Left ventricle myocardium superior (tissue), 1 donor: ENCODE measurements at regions of chr3 and their contacts with region 1.

Region 1: GRCh38 chr3:72999951-73000350 is 3.3 kb downstream of the PPP4R2 start:
- DNase-seq: no peak
- ATAC-seq: no peak

Region 2: GRCh38 chr3:72694398-72694797 is 305.6 kb before region 1 on chr3:
- intact Hi-C with region 1: no loop called
- DNase-seq: no peak
- ATAC-seq: no peak

Region 3: GRCh38 chr3:72938471-72939265 is 61.3 kb before region 1 on chr3:
- intact Hi-C with region 1: loop called (anchors 2 kb)
- DNase-seq: no peak
- ATAC-seq: peak; percentile 92